Motor neuron (in vitro differentiated cells): ENCODE measurements at regions of chr2 and their contacts with region 1.

Region 1: GRCh38 chr2:79660557-79660956 is 147.7 kb downstream of the CTNNA2 start:
- ATAC-seq: peak in 1 of 8 experiments; percentile 28
- H3K4me3 ChIP-seq: no peak overlapping the region
- H3K27ac ChIP-seq: no peak overlapping the region
- H3K4me1 ChIP-seq: peaks cover 0 to 6% of the 10 kb centered on the region in 2 donors

Region 2: DNA sequence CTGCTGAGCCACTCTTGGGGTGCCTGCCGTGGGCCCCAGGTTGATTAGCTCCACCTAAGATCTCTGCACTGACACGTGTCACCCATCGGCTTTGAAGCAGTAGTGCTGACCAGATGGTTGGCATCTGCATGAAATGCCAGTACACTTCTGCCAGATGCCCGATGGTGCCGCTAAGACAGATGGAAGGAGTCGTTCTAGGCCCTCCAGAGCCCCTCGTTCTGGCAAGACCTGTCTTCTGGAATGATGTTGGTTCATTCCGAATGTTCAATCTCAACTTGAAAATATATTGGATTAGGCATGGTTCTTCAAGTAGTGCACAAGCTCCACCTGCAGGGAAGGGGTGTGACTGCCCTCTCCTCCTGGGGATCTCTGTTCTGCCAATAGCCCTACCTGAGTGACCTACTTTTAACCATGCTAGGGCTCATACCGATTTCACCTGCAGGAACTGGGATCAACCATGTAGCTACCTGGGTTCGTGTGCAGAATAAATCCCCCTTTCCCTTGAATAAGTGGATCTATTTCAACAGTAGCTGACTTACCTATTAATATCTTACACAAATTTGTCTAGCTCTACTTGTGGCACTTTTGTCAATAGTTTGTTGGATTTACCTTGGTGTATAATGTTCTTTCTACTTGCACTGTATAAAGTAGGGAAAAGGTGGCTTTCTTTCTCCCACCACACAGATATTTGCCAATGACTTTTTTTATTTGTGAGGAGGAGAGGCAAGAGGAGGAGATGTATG is 194.9 kb after region 1 on chr2:
- in situ Hi-C with region 1: loop called in 1 of 9 experiments (anchors 10 kb)
- ATAC-seq: peak; percentile 49 to 76 (median 60)
- H3K4me3 ChIP-seq: no peak overlapping the region
- H3K27ac ChIP-seq: no peak overlapping the region
- H3K4me1 ChIP-seq: peaks cover 4 to 6% of the 10 kb centered on the region in 2 donors

Region 3: GRCh38 chr2:79984476-79984875 is 323.9 kb after region 1 on chr2:
- in situ Hi-C with region 1: no loop called
- ATAC-seq: no peak
- H3K4me3 ChIP-seq: no peak overlapping the region
- H3K27ac ChIP-seq: no peak overlapping the region
- H3K4me1 ChIP-seq: peaks cover 0 to 3% of the 10 kb centered on the region in 2 donors